GM10248 (cell line): ENCODE measurements at regions of chr5 and their contacts with region 1.

Region 1: GRCh38 chr5:157596487-157596886 is 20.9 kb upstream of the ADAM19 start:
- DNase-seq: no peak
- CTCF ChIP-seq: no peak

Region 2: DNA sequence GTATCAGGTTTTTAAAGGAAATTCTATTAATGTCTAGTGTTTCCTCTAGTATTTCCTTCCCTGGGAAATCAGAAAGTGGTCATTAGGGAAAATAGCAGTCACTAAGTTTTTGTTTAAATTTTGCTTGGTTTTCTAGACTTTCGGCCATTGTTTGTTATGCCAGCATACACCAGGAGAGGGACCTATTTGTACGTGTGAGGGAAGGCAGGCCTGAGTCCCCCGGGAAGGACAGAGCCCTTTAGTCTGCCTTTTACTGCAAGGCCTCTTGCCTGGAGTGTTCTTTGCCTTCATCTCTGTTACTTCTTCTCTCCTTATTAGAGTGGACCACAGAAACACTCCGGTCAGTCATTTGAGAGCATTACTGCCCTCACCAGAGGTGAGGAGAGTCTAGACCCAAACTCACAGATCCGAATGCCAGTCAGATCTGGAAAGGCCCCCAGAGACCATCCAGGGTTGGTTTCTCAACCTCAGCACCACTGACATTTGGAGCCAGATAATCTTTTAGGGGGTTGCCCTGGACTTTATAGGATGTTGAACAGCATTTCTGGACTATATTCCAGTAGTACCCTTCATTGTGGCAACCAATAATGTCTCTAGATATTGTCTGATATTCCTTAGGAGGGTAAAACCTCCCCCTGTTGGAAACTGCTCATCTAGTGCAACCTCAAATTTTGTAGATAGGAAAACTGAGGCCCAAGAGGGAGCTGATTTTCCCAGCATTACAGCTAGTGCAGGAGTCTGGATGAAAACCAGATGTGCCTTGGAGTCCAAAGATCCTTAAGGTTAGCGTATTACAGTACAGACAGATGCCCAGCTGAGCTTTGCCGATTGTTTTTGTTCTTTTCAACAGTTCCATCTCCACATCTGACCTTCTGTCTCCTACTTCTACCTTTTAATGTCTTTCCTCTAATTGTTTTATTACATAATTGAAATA is 229.5 kb before region 1 on chr5:
- CTCF ChIA-PET with region 1: no interaction called
- POLR2A ChIA-PET with region 1: no interaction called
- DNase-seq: no peak
- CTCF ChIP-seq: no peak

Region 3: DNA sequence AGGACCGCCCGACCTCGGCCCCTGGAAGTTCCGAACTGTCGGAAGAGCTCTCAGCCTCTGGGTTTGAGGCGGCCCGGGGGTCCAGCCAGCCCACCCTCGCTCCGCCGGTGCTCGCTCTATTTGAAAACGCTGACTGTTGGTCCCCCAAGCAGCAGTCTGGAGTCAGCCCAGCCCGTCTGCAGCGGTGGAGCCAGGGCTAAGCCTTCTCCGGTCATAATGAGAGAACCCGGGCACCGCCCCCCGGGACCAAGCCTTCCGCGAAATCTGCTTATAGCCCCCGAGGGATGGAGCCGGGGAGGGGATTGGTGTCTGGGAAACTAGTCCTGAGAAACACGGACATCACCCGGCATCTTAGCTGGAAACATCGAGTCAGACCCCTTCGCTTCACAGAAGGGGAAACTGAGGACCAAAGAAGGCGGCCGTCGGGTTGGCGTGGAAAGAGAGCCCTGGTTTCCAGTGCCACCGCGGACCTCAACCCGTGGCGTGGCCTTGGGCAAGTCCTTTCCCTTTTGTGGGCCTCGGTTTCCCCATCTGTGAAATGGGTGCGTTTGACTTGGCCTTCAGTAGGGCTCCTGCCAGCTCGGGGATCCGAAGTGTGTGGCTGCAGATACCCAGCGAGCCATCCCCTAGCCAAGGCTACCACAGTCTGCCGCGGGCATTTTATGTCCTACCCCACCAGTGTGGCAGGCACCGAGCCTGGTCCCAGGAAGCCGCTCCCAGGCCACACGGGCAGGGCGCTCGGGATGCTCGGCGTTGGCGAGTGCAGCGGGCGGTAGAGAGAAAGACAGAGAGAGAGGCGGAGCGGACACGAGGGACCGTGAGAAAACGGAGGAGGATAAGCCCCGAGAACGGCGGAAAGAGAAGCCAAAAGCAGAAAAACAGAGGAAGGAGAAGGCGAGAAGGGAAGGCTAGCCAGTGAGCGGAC is 21.8 kb before region 1 on chr5:
- CTCF ChIA-PET with region 1: interaction called, 33 read pairs
- POLR2A ChIA-PET with region 1: no interaction called
- DNase-seq: peak; percentile 45
- CTCF ChIP-seq: no peak

Region 4: GRCh38 chr5:157582731-157583620 is 13.5 kb before region 1 on chr5:
- CTCF ChIA-PET with region 1: interaction called, 42 read pairs
- POLR2A ChIA-PET with region 1: no interaction called
- DNase-seq: no peak
- CTCF ChIP-seq: peak; percentile 12

Region 5: GRCh38 chr5:157607371-157608161 is 11.1 kb after region 1 on chr5:
- CTCF ChIA-PET with region 1: interaction called, 10 read pairs
- POLR2A ChIA-PET with region 1: no interaction called
- DNase-seq: no peak
- CTCF ChIP-seq: no peak

Region 6: GRCh38 chr5:157640406-157641066 is 44.0 kb after region 1 on chr5:
- CTCF ChIA-PET with region 1: no interaction called
- POLR2A ChIA-PET with region 1: no interaction called
- DNase-seq: no peak
- CTCF ChIP-seq: no peak